ENCODE measurements at regions of chr12 and their contacts with region 1.

Region 1: GRCh38 chr12:45183246-45183645 is 32.6 kb upstream of the ANO6 start:
- DNase-seq: peak; percentile 37
- H3K4me3 ChIP-seq: no peak overlapping the region
- H3K27ac ChIP-seq: no peak overlapping the region
- H3K4me1 ChIP-seq: no peaks in the 10 kb centered on the region
- H3K27me3 ChIP-seq: no peaks in the 10 kb centered on the region

Region 2: DNA sequence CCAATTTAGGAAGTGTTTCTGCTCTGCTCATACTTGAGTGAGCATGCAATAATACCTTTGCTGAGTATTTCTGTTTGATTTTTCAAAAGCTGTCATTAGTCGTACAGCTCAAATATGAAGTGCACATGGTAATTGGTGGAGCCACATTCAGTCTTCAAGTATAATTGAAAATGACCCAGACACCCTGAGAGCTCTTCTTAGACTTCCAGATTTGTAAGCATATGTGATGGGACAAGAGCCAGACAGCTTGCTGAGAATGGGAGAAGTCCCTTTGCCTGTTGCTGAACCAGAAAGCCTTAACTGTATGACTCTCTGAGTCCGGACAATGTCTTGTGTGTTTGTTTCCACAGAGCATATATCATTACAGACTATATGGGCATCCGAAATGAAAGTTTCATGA is 1040.1 kb before region 1 on chr12:
- in situ Hi-C with region 1: no loop called
- DNase-seq: no peak
- H3K4me3 ChIP-seq: no peak overlapping the region
- H3K27ac ChIP-seq: no peak overlapping the region
- H3K4me1 ChIP-seq: no peaks in the 10 kb centered on the region
- H3K27me3 ChIP-seq: no peaks in the 10 kb centered on the region

Region 3: DNA sequence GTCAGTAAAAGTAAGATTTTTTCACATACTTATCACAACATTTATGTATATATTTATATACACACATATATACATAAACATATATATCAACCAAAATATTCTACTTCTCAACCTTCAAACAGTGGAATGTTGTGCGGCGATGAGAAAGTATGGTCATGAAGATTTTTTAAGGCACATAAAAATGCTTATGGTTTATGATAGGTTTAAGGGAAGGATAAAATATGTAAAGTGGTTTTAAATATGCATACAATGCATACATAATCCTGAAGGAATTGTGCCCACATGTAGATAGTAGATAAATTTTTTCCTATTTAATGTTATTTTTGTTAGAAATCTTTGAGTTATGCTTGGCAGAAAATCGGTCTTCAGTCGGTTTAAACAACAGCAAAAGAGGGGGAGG is 215.3 kb after region 1 on chr12:
- in situ Hi-C with region 1: loop called (anchors 10 kb)
- DNase-seq: no peak
- H3K4me3 ChIP-seq: no peak overlapping the region
- H3K27ac ChIP-seq: no peak overlapping the region
- H3K4me1 ChIP-seq: no peaks in the 10 kb centered on the region
- H3K27me3 ChIP-seq: no peaks in the 10 kb centered on the region

Region 4: DNA sequence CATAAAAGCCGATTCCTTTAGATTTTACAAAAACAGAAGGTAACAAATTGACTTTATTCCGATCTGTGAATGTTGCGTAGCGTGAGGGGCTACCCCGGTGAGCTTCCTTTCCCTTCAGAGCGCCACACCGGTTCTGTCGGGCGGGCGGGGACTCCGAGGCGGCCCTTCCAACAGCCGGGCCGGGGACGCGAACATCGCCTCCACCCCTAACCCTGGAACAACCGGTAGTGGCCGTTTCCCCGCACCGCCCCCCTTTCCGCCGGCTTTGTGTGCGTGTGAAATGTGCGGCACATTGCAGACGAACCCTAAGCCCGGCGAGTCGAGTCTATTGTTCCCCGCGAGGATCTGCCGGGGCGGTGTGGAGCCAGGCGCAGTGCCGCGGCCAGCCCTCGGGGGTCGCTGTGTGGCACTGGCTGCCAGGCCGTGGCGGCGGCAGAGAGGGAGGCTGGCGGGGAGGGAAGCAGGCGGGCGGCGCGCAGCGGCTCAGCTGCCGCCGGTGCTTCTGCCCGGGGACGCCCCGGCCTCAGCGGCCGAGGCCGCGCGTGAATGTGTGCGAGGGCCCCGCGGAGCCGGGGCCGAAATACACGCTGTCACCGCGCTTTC is 545.5 kb after region 1 on chr12:
- in situ Hi-C with region 1: loop called (anchors 25 kb)
- DNase-seq: peak; percentile 98
- H3K4me3 ChIP-seq: peak overlapping the region; percentile 95
- H3K27ac ChIP-seq: peak overlapping the region; percentile 94
- H3K4me1 ChIP-seq: peaks cover 34% of the 10 kb centered on the region
- H3K27me3 ChIP-seq: no peaks in the 10 kb centered on the region

Region 5: GRCh38 chr12:45966486-45966885 is 783.2 kb after region 1 on chr12:
- in situ Hi-C with region 1: no loop called
- DNase-seq: peak; percentile 79
- H3K4me3 ChIP-seq: peak overlapping the region; percentile 52
- H3K27ac ChIP-seq: peak overlapping the region; percentile 39
- H3K4me1 ChIP-seq: peaks cover 67% of the 10 kb centered on the region
- H3K27me3 ChIP-seq: no peaks in the 10 kb centered on the region

Measured in GM23248 (cell line).